Activated CD4-positive, alpha-beta T cell treated with anti-CD3 and anti-CD28 coated beads for 36 hours (primary cell): ENCODE measurements at regions of chr17 and their contacts with region 1.

Region 1: GRCh38 chr17:5419356-5419958 is at the start of gene NUP88:
- DNase-seq: peak; percentile 98
- ATAC-seq: peak; percentile 95
- H3K4me3 Mint-ChIP-seq: peak within 1 kb of the TSS; percentile 98
- H3K27ac Mint-ChIP-seq: peak within 1 kb of the TSS; percentile 100
- H3K4me1 Mint-ChIP-seq: peaks cover 41% of the 10 kb centered on the region
- H3K27me3 Mint-ChIP-seq: no peaks in the 10 kb centered on the region
- total RNA-seq, gene NUP88: 135 to 199 TPM

Region 2: DNA sequence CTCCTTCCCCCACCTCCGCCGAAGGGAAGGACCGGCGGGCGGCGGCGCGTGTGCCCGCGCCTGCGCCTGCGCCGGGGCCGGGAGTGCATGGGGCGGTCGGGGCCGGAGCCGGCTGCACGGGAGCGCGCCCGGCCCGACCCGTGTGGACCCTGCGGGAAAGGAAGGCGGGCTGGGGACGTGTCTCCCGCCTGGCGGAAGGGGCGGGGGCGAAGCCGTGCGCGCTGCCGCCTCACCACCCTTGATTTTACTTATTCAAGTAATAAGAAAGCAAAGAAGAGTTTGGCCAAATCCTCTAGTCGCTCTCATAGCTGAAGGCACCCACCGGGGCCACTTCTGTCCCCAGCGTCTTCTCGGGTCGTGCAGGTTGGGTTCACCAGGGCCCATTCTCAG is 470.5 kb before region 1 on chr17:
- CTCF ChIA-PET with region 1: no interaction called
- POLR2A ChIA-PET with region 1: no interaction called
- intact Hi-C with region 1: loop called in 1 of 2 experiments (anchors 1 kb)
- DNase-seq: peak; percentile 88
- ATAC-seq: peak; percentile 39
- H3K4me3 Mint-ChIP-seq: peak overlapping the region; percentile 99
- H3K27ac Mint-ChIP-seq: peak overlapping the region; percentile 100
- H3K4me1 Mint-ChIP-seq: peaks cover 34% of the 10 kb centered on the region
- H3K27me3 Mint-ChIP-seq: no peaks in the 10 kb centered on the region

Region 3: GRCh38 chr17:5111402-5112204 is 307.9 kb before region 1 on chr17 and contains the start of gene ZNF232:
- CTCF ChIA-PET with region 1: interaction called, 4 read pairs
- POLR2A ChIA-PET with region 1: no interaction called
- intact Hi-C with region 1: loop called in 1 of 2 experiments (anchors 1 kb)
- DNase-seq: peak; percentile 97
- ATAC-seq: peak; percentile 93
- H3K4me3 Mint-ChIP-seq: peak within 1 kb of the TSS; percentile 83
- H3K27ac Mint-ChIP-seq: peak within 1 kb of the TSS; percentile 73
- H3K4me1 Mint-ChIP-seq: peaks cover 27% of the 10 kb centered on the region
- H3K27me3 Mint-ChIP-seq: peaks cover 10% of the 10 kb centered on the region
- total RNA-seq, gene ZNF232: 16.1 to 16.2 TPM

Region 4: GRCh38 chr17:5281814-5282653 is 137.4 kb before region 1 on chr17 and contains the start of gene RABEP1:
- CTCF ChIA-PET with region 1: no interaction called
- POLR2A ChIA-PET with region 1: interaction called, 4 read pairs
- intact Hi-C with region 1: loop called (anchors 1 to 5 kb)
- DNase-seq: peak; percentile 97
- ATAC-seq: peak; percentile 81
- H3K4me3 Mint-ChIP-seq: peak within 1 kb of the TSS; percentile 86
- H3K27ac Mint-ChIP-seq: peak within 1 kb of the TSS; percentile 90
- H3K4me1 Mint-ChIP-seq: peaks cover 32% of the 10 kb centered on the region
- H3K27me3 Mint-ChIP-seq: no peaks in the 10 kb centered on the region
- total RNA-seq, gene RABEP1: 60.4 to 66.2 TPM

Region 5: GRCh38 chr17:5526821-5527598 is 107.6 kb after region 1 on chr17:
- CTCF ChIA-PET with region 1: no interaction called
- POLR2A ChIA-PET with region 1: no interaction called
- intact Hi-C with region 1: loop called in 1 of 2 experiments (anchors 1 kb)
- DNase-seq: peak; percentile 88
- ATAC-seq: peak; percentile 98
- H3K4me3 Mint-ChIP-seq: no peak overlapping the region
- H3K27ac Mint-ChIP-seq: peak overlapping the region; percentile 88
- H3K4me1 Mint-ChIP-seq: peaks cover 15% of the 10 kb centered on the region
- H3K27me3 Mint-ChIP-seq: no peaks in the 10 kb centered on the region

Region 6: GRCh38 chr17:5730373-5730772 is 310.9 kb after region 1 on chr17:
- CTCF ChIA-PET with region 1: no interaction called
- POLR2A ChIA-PET with region 1: no interaction called
- intact Hi-C with region 1: no loop called
- DNase-seq: no peak
- ATAC-seq: no peak
- H3K4me3 Mint-ChIP-seq: no peak overlapping the region
- H3K27ac Mint-ChIP-seq: no peak overlapping the region
- H3K4me1 Mint-ChIP-seq: no peaks in the 10 kb centered on the region
- H3K27me3 Mint-ChIP-seq: peaks cover 17% of the 10 kb centered on the region

Region 7: DNA sequence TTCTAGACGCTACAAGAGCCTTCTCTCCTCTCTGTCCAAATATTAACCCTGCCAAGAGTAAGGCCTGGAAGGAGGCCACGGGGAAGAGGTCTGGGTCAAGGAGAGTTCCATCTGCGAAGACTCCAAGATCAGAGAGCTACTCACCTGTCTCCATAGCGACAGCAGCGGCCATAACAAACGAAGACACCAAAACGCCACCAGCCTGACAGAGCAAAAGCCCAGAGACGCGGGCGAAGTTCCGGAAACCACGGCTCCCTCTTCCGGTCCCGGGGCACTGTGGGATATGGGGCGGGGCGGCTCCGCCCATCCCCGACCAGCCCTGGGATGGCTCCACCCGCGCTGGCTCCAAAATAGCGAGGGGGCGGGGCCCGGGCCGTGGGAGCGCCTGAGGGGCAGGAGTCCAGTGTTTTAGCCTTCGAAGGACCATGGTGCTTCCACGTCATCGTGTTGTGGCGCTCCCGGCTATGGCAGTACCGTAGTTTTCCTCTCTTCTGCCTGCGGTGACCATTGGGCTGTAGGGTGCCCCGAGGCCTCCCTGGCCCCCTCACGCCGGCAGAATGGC is 1232.0 kb after region 1 on chr17 and contains the starts of genes C17orf100 and MED31:
- CTCF ChIA-PET with region 1: no interaction called
- POLR2A ChIA-PET with region 1: no interaction called
- intact Hi-C with region 1: loop called (anchors 1 to 10 kb)
- DNase-seq: peak; percentile 97
- ATAC-seq: peak; percentile 95
- H3K4me3 Mint-ChIP-seq: peak within 1 kb of the TSS; percentile 98
- H3K27ac Mint-ChIP-seq: peak within 1 kb of the TSS; percentile 99
- H3K4me1 Mint-ChIP-seq: peaks cover 55% of the 10 kb centered on the region
- H3K27me3 Mint-ChIP-seq: peaks cover 2% of the 10 kb centered on the region
- total RNA-seq, gene C17orf100: 1.6 to 2.0 TPM
- total RNA-seq, gene MED31: 17.7 to 24.5 TPM